ENCODE measurements at regions of chr22 and their contacts with region 1.

Region 1: GRCh38 chr22:32796865-32797573 is 4.5 kb upstream of the TIMP3 start:
- DNase-seq: peak; percentile 74 to 80
- ATAC-seq: peak; percentile 57 to 79 (median 70)
- H3K4me3 ChIP-seq: no peak overlapping the region
- H3K27ac ChIP-seq: peak overlapping the region in 6 of 10 donors; percentile 13 to 54 (median 37)
- H3K4me1 ChIP-seq: peaks cover 2 to 43% (median 22%) of the 10 kb centered on the region in 9 donors
- H3K27me3 ChIP-seq: peaks cover 0 to 18% (median 0%) of the 10 kb centered on the region in 7 donors
- CTCF ChIP-seq: peak; percentile 82 to 95 (median 92)

Region 2: GRCh38 chr22:32655068-32655467 is 142.0 kb before region 1 on chr22:
- intact Hi-C with region 1: loop called (anchors 1 to 5 kb)
- DNase-seq: no peak
- ATAC-seq: no peak
- H3K4me3 ChIP-seq: no peak overlapping the region
- H3K27ac ChIP-seq: no peak overlapping the region
- H3K4me1 ChIP-seq: peaks cover 0 to 7% (median 1%) of the 10 kb centered on the region in 9 donors
- H3K27me3 ChIP-seq: no peaks in the 10 kb centered on the region
- CTCF ChIP-seq: no peak

Region 3: DNA sequence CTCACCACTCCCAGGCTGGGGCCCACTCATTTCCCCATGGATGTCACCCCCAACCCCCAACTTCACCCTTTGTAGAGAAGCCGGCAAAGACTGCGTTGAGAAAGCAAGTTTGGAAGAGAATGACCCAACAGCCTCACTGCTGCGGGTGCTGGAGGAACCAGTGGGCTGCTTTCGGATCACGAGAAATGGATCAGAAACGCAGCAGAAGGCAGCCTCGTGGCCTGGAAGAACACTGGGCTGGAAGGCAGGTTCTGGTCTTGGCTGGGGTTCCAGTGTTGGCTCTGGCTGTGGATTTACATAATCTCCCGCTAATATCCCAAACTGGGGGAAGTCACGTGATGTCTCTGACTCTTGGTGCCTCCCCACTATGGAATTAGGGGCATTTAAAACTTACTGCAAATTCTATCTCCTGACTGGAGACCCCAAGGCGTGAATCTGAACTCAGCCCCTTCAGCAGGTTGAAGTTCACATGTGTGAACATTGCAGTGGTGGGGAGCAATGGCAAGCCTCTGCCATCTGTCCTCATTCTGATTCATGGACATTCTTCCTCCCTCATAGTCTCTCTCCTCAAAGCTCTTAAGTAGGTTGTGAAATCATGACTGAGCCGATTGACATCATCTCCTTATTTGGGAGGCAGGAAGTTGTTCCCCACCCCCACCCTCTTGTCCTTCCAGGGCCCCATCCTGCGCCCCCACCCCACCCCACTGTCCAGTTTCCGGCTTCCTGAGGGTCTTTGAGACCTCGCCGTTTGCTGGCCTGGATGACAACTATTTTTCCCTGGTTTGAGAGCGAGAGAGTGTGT is 32.5 kb before region 1 on chr22:
- intact Hi-C with region 1: loop called in 1 of 10 experiments (anchors 5 kb)
- DNase-seq: peak; percentile 47 to 65
- ATAC-seq: peak; percentile 50 to 83 (median 70)
- H3K4me3 ChIP-seq: no peak overlapping the region
- H3K27ac ChIP-seq: peak overlapping the region; percentile 50 to 88 (median 75)
- H3K4me1 ChIP-seq: peaks cover 14 to 50% (median 46%) of the 10 kb centered on the region in 9 donors
- H3K27me3 ChIP-seq: peaks cover 0 to 13% (median 0%) of the 10 kb centered on the region in 7 donors
- CTCF ChIP-seq: no peak

Region 4: DNA sequence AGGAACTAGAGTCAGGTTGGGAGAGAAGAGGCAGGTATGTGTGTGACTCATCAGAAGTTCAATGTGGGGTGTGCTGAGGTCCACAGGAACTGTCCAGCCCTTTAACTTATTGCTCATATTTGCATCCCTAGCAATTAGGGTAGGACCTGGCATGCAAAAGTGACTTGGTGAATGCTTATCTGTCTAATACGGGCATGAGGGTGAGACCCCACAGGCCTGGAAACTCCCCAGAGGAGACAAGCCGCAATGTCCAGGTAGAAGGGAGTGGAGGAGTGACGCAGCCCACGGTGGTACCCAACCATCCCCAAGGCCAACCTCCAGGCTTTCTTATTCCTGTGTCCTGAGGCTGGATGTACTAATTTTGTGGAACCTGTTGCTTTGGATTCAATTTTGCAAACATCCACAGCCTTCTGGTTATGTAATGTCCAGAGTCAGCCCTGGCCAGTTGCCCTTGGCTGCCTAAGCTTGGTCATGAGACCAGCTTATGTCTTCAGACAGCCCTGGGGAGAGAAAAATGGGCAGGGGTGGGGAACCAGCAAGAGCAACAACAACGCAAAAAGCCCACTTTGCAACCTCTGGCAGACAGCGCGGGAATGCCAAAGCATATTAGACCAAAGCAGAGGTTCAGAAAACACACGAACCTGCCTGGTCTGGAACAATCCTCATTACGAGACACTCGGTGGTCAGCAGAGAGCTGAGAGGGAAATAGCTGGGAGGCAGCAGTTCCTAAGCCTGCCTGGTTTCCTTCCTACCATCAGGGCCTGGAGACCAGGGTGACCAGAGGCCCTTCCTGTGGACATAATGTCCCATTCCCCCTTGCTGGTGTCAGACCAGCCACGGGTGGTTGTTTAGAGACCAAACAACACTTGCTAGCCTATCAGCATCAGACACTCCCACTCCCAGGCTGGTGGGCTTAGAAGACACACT is 53.8 kb after region 1 on chr22:
- intact Hi-C with region 1: loop called in 3 of 10 experiments (anchors 1 to 5 kb)
- DNase-seq: peak; percentile 78 to 80
- ATAC-seq: peak; percentile 20 to 73 (median 60)
- H3K4me3 ChIP-seq: no peak overlapping the region
- H3K27ac ChIP-seq: peak overlapping the region; percentile 67 to 90 (median 73)
- H3K4me1 ChIP-seq: peaks cover 59 to 100% (median 99%) of the 10 kb centered on the region in 9 donors
- H3K27me3 ChIP-seq: no peaks in the 10 kb centered on the region
- CTCF ChIP-seq: no peak

Region 5: DNA sequence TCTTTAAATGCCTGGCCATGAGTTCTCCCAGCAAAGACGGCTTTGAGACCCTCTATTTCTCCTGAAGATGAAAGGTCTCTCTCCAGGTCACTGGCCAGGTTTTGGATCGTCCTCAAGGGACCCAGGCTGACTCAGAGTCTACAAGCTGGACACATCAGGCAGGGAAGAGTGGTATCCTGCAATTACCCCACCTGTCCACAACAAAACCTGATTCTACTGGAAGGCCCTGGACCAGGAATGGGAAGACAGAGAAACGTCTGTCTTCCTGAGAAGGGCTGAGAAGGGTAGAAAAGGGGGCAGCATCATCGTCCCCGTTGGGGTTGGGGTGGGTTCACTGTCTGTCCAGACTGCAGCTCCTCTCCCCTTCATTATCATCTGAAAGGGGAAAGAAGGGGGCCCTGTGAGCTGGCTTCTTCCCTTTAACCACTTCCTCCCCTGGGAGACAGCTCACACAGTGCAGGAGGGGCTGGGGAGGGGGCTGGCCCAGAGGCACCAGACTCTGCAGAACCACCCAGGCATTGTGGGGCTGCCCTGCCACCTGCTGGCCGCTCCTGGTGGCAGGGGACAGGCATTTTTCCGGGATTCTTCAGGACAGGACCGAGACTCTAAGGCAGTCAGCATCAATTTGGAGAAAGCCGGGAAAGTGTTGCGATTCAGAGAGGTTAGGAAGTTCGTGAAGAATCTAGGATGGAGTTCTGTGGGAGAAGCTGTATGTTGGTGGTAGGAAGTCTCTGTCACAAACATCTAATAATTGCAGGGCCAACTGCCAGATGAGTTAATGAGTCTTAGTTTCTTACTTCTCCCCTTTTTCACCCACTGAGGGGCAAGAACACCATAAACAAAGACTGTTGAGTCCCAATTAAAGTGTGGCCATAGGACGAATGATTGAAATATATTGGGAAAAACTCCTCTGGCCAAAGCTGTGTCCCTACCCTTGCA is 203.6 kb after region 1 on chr22:
- intact Hi-C with region 1: loop called in 1 of 10 experiments (anchors 5 kb)
- DNase-seq: peak; percentile 47 to 74
- ATAC-seq: peak; percentile 71 to 87 (median 82)
- H3K4me3 ChIP-seq: no peak overlapping the region
- H3K27ac ChIP-seq: no peak overlapping the region
- H3K4me1 ChIP-seq: peaks cover 0 to 12% (median 5%) of the 10 kb centered on the region in 9 donors
- H3K27me3 ChIP-seq: peaks cover 0 to 4% (median 0%) of the 10 kb centered on the region in 7 donors
- CTCF ChIP-seq: peak; percentile 91 to 97 (median 93)